ENCODE measurements at regions of chr7 and their contacts with region 1.

Region 1: DNA sequence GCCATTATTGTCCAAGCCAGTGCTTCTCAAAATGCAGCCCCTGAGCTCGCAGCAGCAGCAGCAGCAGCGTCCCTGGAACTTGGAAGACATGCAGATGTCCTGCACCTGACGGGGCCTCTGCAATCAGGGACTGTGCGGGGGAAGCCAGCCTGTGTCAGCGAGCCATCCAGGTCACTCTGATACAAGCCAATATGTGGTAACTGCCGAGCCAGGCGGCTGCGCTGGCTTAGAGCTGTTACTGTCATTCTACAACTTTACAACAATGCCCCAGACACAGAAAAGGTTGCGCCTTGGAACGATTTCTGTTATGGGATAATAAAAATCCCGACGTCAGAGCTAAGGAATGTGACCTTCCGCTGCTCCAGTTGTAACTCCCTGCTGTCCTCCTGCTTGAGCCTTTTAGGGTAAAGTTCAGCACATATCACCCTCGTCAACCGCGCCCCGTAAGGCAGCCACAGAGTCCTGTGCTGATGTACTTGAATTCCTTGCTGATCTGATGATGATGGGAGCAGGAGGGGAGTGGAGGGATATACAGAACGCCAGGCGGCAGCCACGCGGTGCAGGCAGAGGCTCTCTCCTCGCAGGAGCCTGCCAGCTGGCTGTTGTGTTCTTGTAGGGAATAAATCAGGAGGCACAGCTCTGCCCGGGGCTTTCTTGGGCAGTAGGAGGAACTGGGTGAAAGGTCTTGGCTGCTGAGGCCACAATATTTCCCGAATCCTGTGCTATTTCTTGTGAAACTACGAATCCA is 20.0 kb upstream of the CRYGN start:
- DNase-seq: peak in 1 of 4 experiments; percentile 8
- ATAC-seq: peak; percentile 18; the same call in 2 of the 3 replicates
- H3K4me3 ChIP-seq: no peak overlapping the region
- H3K27ac ChIP-seq: no peak overlapping the region
- H3K4me1 ChIP-seq: peaks cover 0 to 3% of the 10 kb centered on the region in 2 experiments; a peak in 1 of 5 replicates
- H3K27me3 ChIP-seq: peaks cover 42 to 55% of the 10 kb centered on the region in 2 experiments
- CTCF ChIP-seq: 0 out of 6 replicates have a peak, but pooled peaks of 1 of the 3 experiments have one; percentile 7
- EP300 ChIP-seq: no peak
- POLR2A ChIP-seq: no peak
- RAD21 ChIP-seq: peak in 1 of 2 experiments; percentile 27; a peak in 1 of 4 replicates

Region 2: GRCh38 chr7:151537818-151538561 is 78.1 kb after region 1 on chr7:
- CTCF ChIA-PET with region 1: no interaction called
- POLR2A ChIA-PET with region 1: no interaction called
- in situ Hi-C with region 1: no loop called
- intact Hi-C with region 1: no loop called
- DNase-seq: no peak
- ATAC-seq: no peak
- H3K4me3 ChIP-seq: no peak overlapping the region
- H3K27ac ChIP-seq: no peak overlapping the region
- H3K4me1 ChIP-seq: no peaks in the 10 kb centered on the region
- H3K27me3 ChIP-seq: peaks cover 50 to 57% of the 10 kb centered on the region in 2 experiments
- CTCF ChIP-seq: no peak
- EP300 ChIP-seq: no peak
- POLR2A ChIP-seq: no peak
- RAD21 ChIP-seq: no peak

Region 3: GRCh38 chr7:151631968-151632749 is 172.3 kb after region 1 on chr7:
- CTCF ChIA-PET with region 1: no interaction called
- POLR2A ChIA-PET with region 1: no interaction called
- in situ Hi-C with region 1: no loop called
- intact Hi-C with region 1: loop called (anchors 5 kb)
- DNase-seq: peak; percentile 89 to 99 (median 96)
- ATAC-seq: peak; percentile 96
- H3K4me3 ChIP-seq: peak overlapping the region; percentile 54
- H3K27ac ChIP-seq: no peak overlapping the region
- H3K4me1 ChIP-seq: peaks cover 6 to 15% of the 10 kb centered on the region in 2 experiments; a peak in 3 of 5 replicates
- H3K27me3 ChIP-seq: peaks cover 28 to 33% of the 10 kb centered on the region in 2 experiments
- CTCF ChIP-seq: peak; percentile 13 to 74 (median 58); a peak in 4 of 6 replicates
- EP300 ChIP-seq: no peak
- POLR2A ChIP-seq: no peak
- RAD21 ChIP-seq: peak in 1 of 2 experiments; percentile 39; a peak in 3 of 4 replicates